BJ (cell line): ENCODE measurements at regions of chr5 and their contacts with region 1.

Region 1: GRCh38 chr5:179777909-179778308 is 15.9 kb upstream of the LTC4S start:
- DNase-seq: no peak
- H3K4me3 ChIP-seq: no peak overlapping the region
- H3K27me3 ChIP-seq: no peaks in the 10 kb centered on the region
- CTCF ChIP-seq: no peak

Region 2: DNA sequence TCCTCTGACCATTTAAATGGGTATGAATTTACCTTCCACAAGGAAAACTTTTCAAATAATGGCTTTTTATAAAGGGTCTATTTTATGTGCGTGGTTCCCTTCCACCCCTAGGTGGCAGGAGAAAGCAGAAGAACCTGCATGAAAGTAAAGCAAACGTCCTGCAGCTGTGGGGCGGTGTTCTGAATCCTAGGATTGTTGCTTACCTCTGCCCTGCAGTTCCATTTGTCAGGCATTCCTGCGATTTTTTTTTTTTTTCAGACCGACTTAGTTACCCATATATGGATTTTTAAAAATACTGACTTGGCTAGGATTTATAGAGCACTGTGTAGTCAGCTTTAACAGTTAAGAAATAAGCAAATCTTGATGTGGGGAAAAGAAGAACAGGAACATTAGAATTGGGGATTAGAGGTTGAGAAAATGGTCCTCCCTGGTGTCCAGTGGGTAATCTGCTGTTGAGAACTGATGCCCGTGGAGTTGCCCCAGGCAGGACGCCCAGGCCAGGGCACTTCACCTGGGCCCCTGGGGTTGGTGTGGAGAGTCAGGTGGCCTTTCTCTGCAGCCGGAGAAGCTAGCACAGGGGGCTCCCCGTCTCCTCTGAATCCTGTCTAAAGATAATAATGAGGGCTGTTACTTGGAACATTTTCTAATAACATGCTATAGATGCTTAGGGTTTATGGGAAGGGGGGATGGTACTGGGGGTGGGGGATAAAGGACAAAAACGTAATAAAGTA is 14.5 kb before region 1 on chr5:
- CTCF ChIA-PET with region 1: interaction called, 17 read pairs
- POLR2A ChIA-PET with region 1: no interaction called
- DNase-seq: peak; percentile 53
- H3K4me3 ChIP-seq: no peak overlapping the region
- H3K27me3 ChIP-seq: no peaks in the 10 kb centered on the region
- CTCF ChIP-seq: peak; percentile 90